ENCODE measurements at regions of chr13 and their contacts with region 1.

Region 1: GRCh38 chr13:110715395-110716235 is 2.1 kb downstream of the ING1 start:
- DNase-seq: peak; percentile 98
- H3K4me3 Mint-ChIP-seq: peak overlapping the region; percentile 93
- H3K27ac Mint-ChIP-seq: peak overlapping the region; percentile 96
- H3K4me1 Mint-ChIP-seq: peaks cover 31% of the 10 kb centered on the region
- H3K27me3 Mint-ChIP-seq: no peaks in the 10 kb centered on the region

Region 2: DNA sequence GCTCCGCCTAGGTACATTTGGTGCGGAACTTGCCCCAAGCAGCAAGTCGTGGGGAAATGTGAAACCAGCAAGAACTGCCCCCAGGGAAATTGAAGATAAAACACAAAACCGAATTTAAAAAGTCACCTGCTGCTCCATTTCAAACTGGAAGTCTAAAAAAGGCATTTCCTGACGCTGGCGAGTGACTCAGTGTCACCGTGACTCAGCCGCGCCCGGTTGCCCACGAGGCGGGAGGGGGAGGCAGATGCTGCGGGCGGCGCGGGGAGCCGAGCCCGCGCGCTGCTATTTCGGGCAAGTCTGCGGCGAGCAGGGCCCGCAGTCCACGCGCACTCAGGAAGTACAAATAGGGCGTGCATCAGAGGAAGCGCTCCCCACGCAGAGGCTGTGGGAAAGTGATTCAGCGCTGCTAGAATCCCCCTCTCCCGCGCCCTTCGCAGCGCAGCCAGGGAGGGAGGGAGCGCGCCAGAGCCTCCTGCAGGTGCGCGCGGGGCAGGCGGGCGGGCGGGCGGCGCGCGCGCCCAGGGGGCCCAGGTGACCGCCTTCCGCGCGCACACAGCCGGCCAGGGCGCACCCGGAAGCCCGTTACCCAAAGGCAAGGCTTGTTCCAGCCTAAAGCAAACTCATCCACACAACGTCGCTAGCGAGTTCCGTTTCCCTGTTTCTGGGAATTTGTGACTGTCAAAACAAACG is 577.5 kb before region 1 on chr13:
- CTCF ChIA-PET with region 1: no interaction called
- intact Hi-C with region 1: loop called (anchors 2 kb)
- DNase-seq: peak; percentile 85
- H3K4me3 Mint-ChIP-seq: peak overlapping the region; percentile 73
- H3K27ac Mint-ChIP-seq: peak overlapping the region; percentile 59
- H3K4me1 Mint-ChIP-seq: peaks cover 9% of the 10 kb centered on the region
- H3K27me3 Mint-ChIP-seq: peaks cover 41% of the 10 kb centered on the region

Region 3: DNA sequence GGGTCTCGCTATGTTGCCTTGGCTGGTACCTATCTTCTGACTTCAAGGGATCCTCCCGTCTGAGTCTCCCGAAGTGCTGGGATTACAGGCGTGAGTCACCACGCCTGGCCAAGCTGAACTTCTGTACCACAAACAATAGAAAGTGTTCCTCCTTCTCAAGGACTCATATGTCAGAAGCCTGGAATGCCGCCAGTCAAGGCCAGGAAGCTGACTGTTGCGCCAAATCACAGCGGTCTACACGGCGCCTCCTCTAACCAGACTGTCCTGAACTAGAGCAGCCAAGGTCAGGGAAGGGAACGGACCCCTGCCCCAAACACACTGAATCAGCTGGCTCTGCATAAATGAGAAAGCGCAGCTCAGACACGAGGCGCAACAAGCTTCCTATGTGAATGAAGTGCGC is 168.7 kb before region 1 on chr13:
- CTCF ChIA-PET with region 1: no interaction called
- intact Hi-C with region 1: no loop called
- DNase-seq: no peak
- H3K4me3 Mint-ChIP-seq: no peak overlapping the region
- H3K27ac Mint-ChIP-seq: no peak overlapping the region
- H3K4me1 Mint-ChIP-seq: no peaks in the 10 kb centered on the region
- H3K27me3 Mint-ChIP-seq: no peaks in the 10 kb centered on the region

Region 4: GRCh38 chr13:110615322-110616102 is 100.1 kb before region 1 on chr13 and contains the start of gene NAXD:
- CTCF ChIA-PET with region 1: no interaction called
- intact Hi-C with region 1: loop called (anchors 1 kb)
- DNase-seq: peak; percentile 94
- H3K4me3 Mint-ChIP-seq: peak within 1 kb of the TSS; percentile 89
- H3K27ac Mint-ChIP-seq: peak within 1 kb of the TSS; percentile 89
- H3K4me1 Mint-ChIP-seq: peaks cover 40% of the 10 kb centered on the region
- H3K27me3 Mint-ChIP-seq: no peaks in the 10 kb centered on the region
- total RNA-seq, gene NAXD: 20.8 to 23.3 TPM

Region 5: GRCh38 chr13:110726726-110727125 is 11.1 kb after region 1 on chr13:
- CTCF ChIA-PET with region 1: no interaction called
- intact Hi-C with region 1: loop called (anchors 1 kb)
- DNase-seq: peak; percentile 78
- H3K4me3 Mint-ChIP-seq: peak overlapping the region; percentile 34
- H3K27ac Mint-ChIP-seq: peak overlapping the region; percentile 84
- H3K4me1 Mint-ChIP-seq: peaks cover 22% of the 10 kb centered on the region
- H3K27me3 Mint-ChIP-seq: no peaks in the 10 kb centered on the region

Region 6: DNA sequence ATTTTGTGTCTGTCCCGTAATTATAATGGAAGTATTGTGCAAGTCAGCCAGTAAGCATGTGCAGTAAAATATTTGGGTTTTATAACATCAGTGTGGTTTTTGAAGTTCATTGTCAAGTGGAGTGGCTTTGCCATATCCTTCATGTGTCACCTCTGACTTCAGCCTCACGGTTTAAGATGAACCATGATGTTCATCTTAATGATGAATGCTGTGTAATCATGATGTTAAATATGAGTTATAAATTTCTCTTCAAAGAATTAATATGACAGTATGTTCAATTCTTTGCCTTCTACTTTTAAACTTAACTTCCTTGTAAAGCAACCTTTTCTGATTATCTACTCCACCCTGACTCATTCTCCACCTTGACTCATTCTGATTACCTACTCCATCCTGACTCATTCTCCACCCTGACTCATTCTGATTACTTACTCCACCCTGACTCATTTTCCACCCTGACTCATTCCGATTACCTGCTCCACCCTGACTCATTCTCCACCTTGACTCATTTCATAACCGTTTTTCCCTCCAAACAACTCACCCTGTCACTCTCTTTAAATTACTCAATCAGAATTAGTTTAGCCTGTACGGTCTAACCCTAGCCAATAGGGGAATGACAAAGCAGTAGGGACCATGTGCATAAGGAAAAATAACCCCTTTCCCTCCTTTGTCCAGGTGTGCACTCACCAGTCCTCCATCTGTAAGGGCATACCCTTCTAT is 249.6 kb after region 1 on chr13:
- CTCF ChIA-PET with region 1: no interaction called
- intact Hi-C with region 1: loop called (anchors 2 kb)
- DNase-seq: peak; percentile 56
- H3K4me3 Mint-ChIP-seq: no peak overlapping the region
- H3K27ac Mint-ChIP-seq: peak overlapping the region; percentile 75
- H3K4me1 Mint-ChIP-seq: peaks cover 16% of the 10 kb centered on the region
- H3K27me3 Mint-ChIP-seq: peaks cover 26% of the 10 kb centered on the region

Region 7: GRCh38 chr13:112587212-112587763 is 1871.7 kb after region 1 on chr13:
- CTCF ChIA-PET with region 1: no interaction called
- intact Hi-C with region 1: loop called (anchors 2 kb)
- DNase-seq: peak; percentile 78
- H3K4me3 Mint-ChIP-seq: peak overlapping the region; percentile 96
- H3K27ac Mint-ChIP-seq: peak overlapping the region; percentile 93
- H3K4me1 Mint-ChIP-seq: peaks cover 47% of the 10 kb centered on the region
- H3K27me3 Mint-ChIP-seq: no peaks in the 10 kb centered on the region

Measured in activated naive CD4-positive, alpha-beta T cell treated with anti-CD3 and anti-CD28 coated beads for 36 hours (primary cell).